Psoas muscle (tissue), 8 donors: ENCODE measurements at regions of chr2 and their contacts with region 1.

Region 1: DNA sequence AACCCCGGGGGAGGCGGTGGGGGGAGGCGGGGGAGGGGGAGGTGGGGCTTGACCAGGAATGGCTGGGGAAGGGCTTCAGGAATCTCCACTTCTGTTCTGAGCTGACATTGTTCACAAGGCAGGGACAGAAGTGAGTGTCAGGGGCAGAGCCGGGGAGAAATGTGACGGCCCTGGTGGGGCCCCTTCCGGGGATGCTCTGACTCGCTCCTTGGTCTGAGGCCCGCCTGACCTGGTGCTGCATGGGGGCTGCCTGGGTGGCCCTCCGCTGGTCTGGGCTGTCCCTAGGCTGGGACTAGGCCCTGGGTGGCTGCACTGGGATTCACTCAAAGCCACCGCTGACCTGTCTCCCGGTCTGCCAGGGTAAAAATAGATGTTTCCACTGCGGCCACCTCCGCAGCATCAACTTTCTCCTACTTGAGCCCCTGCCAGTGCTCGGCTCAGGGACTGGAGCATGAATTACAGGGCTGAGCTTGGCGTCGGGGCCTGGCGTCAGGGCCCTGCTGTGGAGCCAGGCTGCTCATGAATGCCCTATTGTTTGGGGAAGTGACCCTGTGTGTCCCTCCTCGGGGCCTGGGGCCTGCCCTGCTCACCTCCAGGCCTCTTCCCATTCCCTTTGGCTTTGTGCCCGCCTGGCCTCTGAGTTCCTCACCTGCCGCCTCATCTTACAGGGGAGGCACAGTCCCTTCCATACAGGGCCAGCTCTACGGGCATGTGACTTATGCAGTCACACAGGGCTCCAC is 247.5 kb downstream of the DYSF start:
- DNase-seq: peak; percentile 84 to 94
- ATAC-seq: peak; percentile 87 to 91 (median 90)
- H3K4me3 ChIP-seq: no peak overlapping the region
- H3K27ac ChIP-seq: peak overlapping the region; percentile 90
- H3K4me1 ChIP-seq: peaks cover 47% of the 10 kb centered on the region
- H3K27me3 ChIP-seq: no peaks in the 10 kb centered on the region
- CTCF ChIP-seq: no peak

Region 2: GRCh38 chr2:71277536-71278103 is 423.2 kb before region 1 on chr2:
- intact Hi-C with region 1: no loop called
- DNase-seq: peak; percentile 64 to 84
- ATAC-seq: peak; percentile 72 to 83 (median 78)
- H3K4me3 ChIP-seq: peak overlapping the region; percentile 78
- H3K27ac ChIP-seq: peak overlapping the region; percentile 93
- H3K4me1 ChIP-seq: peaks cover 30% of the 10 kb centered on the region
- H3K27me3 ChIP-seq: no peaks in the 10 kb centered on the region
- CTCF ChIP-seq: peak; percentile 66

Region 3: DNA sequence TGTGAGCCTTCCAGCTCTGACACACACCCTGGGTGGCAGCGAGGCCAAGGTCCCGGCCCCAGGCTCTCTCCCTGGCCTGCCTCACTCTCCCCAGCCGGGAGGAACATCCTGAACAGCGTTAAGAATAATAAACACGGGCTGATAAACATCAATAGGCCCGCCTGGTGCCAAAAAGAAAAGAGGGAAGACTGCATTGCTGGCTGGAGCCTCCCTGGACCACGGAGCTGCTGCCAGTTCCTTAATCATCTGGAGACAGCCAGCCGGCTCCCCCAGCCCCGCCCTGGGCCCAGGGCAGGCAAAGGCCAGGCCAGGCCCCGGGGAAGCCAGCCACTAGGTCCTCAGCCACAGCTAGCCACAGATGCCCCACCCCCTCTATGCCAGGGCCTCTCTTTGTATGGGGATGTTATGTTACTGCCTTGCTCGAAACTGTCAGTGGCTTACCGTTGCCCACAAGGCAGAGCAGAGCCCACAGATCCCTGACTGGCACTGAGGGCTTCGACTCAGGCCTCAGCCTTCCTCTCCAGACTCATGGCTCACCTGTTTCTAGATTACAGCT is 46.2 kb after region 1 on chr2:
- intact Hi-C with region 1: loop called in 1 of 2 experiments (anchors 5 kb)
- DNase-seq: peak; percentile 62 to 65
- ATAC-seq: peak in 1 of 4 donors; percentile 12
- H3K4me3 ChIP-seq: no peak overlapping the region
- H3K27ac ChIP-seq: no peak overlapping the region
- H3K4me1 ChIP-seq: peaks cover 74% of the 10 kb centered on the region
- H3K27me3 ChIP-seq: no peaks in the 10 kb centered on the region
- CTCF ChIP-seq: no peak